CD4-positive, alpha-beta memory T cell (primary cell): ENCODE measurements at regions of chr11 and their contacts with region 1.

Region 1: DNA sequence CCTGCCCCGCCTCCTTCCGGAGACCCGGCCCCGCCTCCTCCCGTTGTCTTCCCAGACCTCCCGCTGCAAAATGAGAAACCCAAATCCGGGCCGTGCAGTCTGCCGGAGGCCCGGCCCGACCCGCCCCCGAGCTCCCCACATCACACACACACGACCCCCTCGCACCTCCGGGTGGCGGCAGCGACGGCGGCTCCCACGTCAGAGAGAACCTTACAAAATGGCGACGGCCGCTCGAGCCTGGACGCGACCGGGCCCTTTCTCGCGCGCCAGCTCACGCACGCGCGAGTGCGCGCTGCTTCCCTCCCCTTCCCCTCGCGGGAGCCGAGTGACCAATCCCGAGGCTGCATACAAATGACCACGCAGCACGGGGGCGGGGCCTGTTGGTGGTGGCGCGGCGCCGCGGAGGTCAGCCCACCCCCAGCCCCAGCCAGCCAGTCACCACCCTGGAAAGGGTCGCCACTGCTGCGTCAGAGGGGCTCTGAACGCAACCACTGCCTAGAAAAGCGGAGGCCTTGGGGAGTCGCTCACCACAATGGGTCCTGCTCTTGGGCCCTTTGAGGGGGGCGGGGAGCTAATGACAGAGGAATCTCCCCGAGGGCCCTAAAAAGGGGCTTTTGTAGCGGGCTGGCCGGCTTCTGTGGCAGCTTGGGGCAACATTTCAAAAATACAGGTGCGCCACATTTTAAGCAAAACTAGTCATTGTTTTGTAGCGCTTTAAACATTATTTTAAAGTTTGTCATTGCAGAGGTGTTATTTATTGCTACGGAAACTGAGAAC is at the start of gene RBM4B:
- DNase-seq: peak; percentile 95 to 97 (median 96)
- H3K4me3 ChIP-seq: peak within 1 kb of the TSS; percentile 80 to 87
- H3K4me3 Mint-ChIP-seq: peak within 1 kb of the TSS; percentile 91 to 99 (median 96)
- H3K27ac ChIP-seq: peak within 1 kb of the TSS; percentile 98
- H3K27ac Mint-ChIP-seq: peak within 1 kb of the TSS; percentile 98 to 100 (median 99)
- H3K4me1 ChIP-seq: peaks cover 34% of the 10 kb centered on the region
- H3K4me1 Mint-ChIP-seq: peaks cover 21 to 53% (median 34%) of the 10 kb centered on the region in 4 donors
- H3K27me3 ChIP-seq: no peaks in the 10 kb centered on the region
- H3K27me3 Mint-ChIP-seq: no peaks in the 10 kb centered on the region
- total RNA-seq, gene RBM4B: 26.6 to 26.9 TPM

Region 2: GRCh38 chr11:66311965-66312548 is 365.7 kb before region 1 on chr11:
- CTCF ChIA-PET with region 1: no interaction called
- POLR2A ChIA-PET with region 1: no interaction called
- intact Hi-C with region 1: loop called (anchors 5 kb)
- DNase-seq: peak; percentile 97 to 99 (median 98)
- H3K4me3 ChIP-seq: peak overlapping the region; percentile 43 to 88
- H3K4me3 Mint-ChIP-seq: peak overlapping the region; percentile 89 to 97 (median 94)
- H3K27ac ChIP-seq: peak overlapping the region; percentile 62
- H3K27ac Mint-ChIP-seq: peak overlapping the region; percentile 93 to 100 (median 99)
- H3K4me1 ChIP-seq: peaks cover 22% of the 10 kb centered on the region
- H3K4me1 Mint-ChIP-seq: peaks cover 4 to 20% (median 8%) of the 10 kb centered on the region in 4 donors
- H3K27me3 ChIP-seq: no peaks in the 10 kb centered on the region
- H3K27me3 Mint-ChIP-seq: peaks cover 2 to 3% of the 10 kb centered on the region in 2 donors

Region 3: DNA sequence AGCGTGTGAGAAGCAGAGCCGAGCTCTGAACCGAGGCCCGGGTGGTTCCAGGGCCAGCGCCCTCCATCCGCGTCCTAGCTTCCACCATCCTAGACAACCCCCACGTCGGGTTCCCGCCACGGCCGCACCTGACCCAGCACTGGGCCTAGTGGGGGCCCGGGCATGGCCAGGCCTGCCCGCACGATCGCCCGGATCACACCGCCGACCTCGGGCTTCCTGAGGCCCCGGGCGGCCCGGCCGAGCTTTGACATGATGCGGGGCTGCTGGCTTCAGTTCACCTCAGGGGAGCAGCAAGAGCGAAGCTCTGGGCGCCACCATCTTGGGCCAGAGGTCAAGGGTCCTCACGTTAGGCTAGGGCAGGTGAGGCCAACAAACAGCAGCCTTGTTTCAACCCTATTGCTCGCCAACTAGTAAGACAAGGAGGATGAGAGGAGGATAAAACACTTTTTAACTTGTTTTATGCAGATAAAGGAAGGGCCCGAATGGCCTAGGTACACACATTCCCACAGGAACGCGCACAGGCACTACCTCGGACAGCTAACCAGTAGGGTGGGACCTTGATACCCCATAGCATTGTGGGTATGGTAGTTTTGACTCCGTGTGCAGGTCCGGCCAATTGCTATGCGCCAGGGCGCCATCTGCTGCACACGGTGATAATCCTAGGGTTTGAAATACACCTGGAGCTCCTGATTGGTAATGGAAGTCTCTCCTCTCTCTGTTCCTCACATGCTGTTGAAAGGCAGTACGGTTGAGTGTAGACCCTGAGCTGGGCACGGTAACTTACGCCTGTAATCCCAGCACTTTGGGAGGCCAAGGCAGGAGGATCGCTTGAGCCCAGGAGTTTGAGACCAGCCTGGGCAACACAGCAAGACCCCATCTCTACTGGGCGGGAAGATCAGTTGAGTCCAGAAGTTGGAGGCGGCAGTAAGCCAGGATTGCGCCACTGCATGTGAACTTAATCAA is 239.0 kb before region 1 on chr11 and contains the start of gene MRPL11:
- CTCF ChIA-PET with region 1: interaction called, 20 read pairs
- POLR2A ChIA-PET with region 1: interaction called, 21 read pairs
- intact Hi-C with region 1: no loop called
- DNase-seq: peak; percentile 89 to 92 (median 91)
- H3K4me3 ChIP-seq: peak within 1 kb of the TSS; percentile 67 to 88
- H3K4me3 Mint-ChIP-seq: peak within 1 kb of the TSS; percentile 87 to 94 (median 91)
- H3K27ac ChIP-seq: peak within 1 kb of the TSS; percentile 69
- H3K27ac Mint-ChIP-seq: peak within 1 kb of the TSS; percentile 88 to 100 (median 98)
- H3K4me1 ChIP-seq: peaks cover 7% of the 10 kb centered on the region
- H3K4me1 Mint-ChIP-seq: peaks cover 6 to 17% (median 11%) of the 10 kb centered on the region in 4 donors
- H3K27me3 ChIP-seq: no peaks in the 10 kb centered on the region
- H3K27me3 Mint-ChIP-seq: peaks cover 2 to 3% of the 10 kb centered on the region in 2 donors
- total RNA-seq, gene MRPL11: 22.0 to 27.9 TPM

Region 4: DNA sequence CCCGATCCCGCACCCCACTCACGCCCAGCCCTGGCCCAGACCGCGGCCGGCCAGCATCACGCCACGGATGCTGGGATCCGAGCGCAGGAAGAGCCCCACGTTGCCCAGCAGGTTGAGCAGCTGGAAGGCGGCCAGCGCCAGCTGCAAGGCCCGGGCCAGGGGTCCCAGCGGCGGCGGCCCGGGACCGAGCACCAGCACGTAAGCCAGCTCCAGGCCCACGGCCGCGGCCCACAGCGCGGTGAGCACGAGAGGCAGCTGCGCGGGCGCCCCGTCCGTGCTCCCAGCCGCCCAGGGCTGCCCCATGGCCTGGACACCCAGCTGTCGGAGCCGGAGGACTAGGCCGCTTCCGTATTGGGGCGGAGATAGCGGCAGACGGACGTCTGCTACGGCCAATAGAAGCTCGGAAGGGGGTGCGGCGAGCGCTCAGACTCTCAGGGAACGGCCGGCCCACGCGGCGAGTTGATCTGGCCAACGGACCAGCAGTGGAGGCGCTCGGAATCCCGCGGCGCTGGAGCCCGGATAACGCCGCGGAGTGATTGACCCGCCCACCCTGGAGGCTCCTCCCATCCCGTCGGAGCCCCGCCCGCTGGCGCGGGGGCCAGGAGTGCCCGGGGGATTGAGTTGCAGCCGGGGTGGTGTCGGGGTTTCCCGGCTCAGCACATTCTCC is 132.0 kb before region 1 on chr11 and contains the start of gene ZDHHC24:
- CTCF ChIA-PET with region 1: interaction called, 17 read pairs
- POLR2A ChIA-PET with region 1: interaction called, 44 read pairs
- intact Hi-C with region 1: loop called (anchors 1 kb)
- DNase-seq: peak; percentile 79 to 86 (median 82)
- H3K4me3 ChIP-seq: peak within 1 kb of the TSS; percentile 82 to 84
- H3K4me3 Mint-ChIP-seq: peak within 1 kb of the TSS; percentile 85 to 96 (median 92)
- H3K27ac ChIP-seq: peak within 1 kb of the TSS; percentile 82
- H3K27ac Mint-ChIP-seq: peak within 1 kb of the TSS; percentile 67 to 98 (median 92)
- H3K4me1 ChIP-seq: peaks cover 35% of the 10 kb centered on the region
- H3K4me1 Mint-ChIP-seq: peaks cover 22 to 59% (median 34%) of the 10 kb centered on the region in 4 donors
- H3K27me3 ChIP-seq: no peaks in the 10 kb centered on the region
- H3K27me3 Mint-ChIP-seq: no peaks in the 10 kb centered on the region
- total RNA-seq, gene ZDHHC24: 24.5 to 27.2 TPM

Region 5: GRCh38 chr11:66592457-66593302 is 85.1 kb before region 1 on chr11 and contains the starts of genes CCDC87 and CCS:
- CTCF ChIA-PET with region 1: interaction called, 45 read pairs
- POLR2A ChIA-PET with region 1: interaction called, 50 read pairs
- intact Hi-C with region 1: loop called (anchors 1 kb)
- DNase-seq: peak; percentile 95 to 98 (median 97)
- H3K4me3 ChIP-seq: peak within 1 kb of the TSS; percentile 71 to 98
- H3K4me3 Mint-ChIP-seq: peak within 1 kb of the TSS; percentile 98 to 100 (median 99)
- H3K27ac ChIP-seq: peak within 1 kb of the TSS; percentile 88
- H3K27ac Mint-ChIP-seq: peak within 1 kb of the TSS; percentile 96 to 100 (median 100)
- H3K4me1 ChIP-seq: peaks cover 35% of the 10 kb centered on the region
- H3K4me1 Mint-ChIP-seq: peaks cover 16 to 42% (median 27%) of the 10 kb centered on the region in 4 donors
- H3K27me3 ChIP-seq: no peaks in the 10 kb centered on the region
- H3K27me3 Mint-ChIP-seq: no peaks in the 10 kb centered on the region
- total RNA-seq, gene CCDC87: not detected
- total RNA-seq, gene CCS: 61.0 to 61.5 TPM

Region 6: DNA sequence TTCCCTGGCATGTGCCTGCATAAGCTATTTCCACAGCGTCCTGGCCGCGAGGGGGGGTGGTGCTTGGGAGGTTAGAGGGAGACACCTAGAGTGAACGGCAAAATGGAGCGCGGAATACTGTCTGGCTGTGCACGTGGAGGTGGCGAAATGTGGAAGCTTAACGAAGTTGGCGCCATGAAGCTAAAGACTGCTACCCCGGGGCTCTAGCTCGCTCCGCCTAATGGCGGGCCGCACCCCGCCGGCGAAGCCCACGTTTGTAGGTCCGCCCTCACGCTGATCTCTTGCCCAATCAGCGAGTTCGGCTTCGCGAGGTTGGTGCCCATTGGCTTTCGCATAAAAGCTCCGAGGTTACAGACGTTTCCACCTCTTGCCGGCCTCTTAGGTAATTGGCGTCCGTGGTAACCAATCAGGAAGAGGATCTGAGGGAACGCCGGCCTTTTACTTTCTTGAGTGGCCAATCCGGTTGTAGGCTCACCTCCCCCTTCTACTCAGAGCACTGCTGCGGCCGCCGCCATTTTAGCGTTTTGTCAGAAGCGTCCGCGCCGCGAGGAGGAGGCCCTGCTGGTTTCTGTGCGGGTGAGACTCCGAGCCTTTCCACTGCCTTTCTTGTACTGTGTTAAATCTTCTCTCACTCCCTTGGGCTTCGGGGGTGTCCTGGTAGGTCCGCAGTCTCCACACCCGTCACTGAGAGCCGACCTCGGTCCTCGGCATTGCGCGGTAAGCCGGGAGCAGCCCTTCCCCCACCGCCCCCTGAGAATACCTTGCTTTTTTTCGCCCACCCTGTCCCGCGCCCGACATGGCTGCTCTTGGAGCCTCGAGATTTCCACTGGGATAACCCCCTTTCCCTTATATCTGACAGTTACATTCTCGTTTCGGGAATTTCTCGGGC is 39.4 kb before region 1 on chr11 and contains the start of gene RBM4:
- CTCF ChIA-PET with region 1: interaction called, 21 read pairs
- POLR2A ChIA-PET with region 1: interaction called, 81 read pairs
- intact Hi-C with region 1: loop called (anchors 1 kb)
- DNase-seq: peak; percentile 95 to 99 (median 98)
- H3K4me3 ChIP-seq: peak within 1 kb of the TSS; percentile 63 to 96
- H3K4me3 Mint-ChIP-seq: peak within 1 kb of the TSS; percentile 97 to 99 (median 98)
- H3K27ac ChIP-seq: peak within 1 kb of the TSS; percentile 88
- H3K27ac Mint-ChIP-seq: peak within 1 kb of the TSS; percentile 94 to 99 (median 99)
- H3K4me1 ChIP-seq: peaks cover 49% of the 10 kb centered on the region
- H3K4me1 Mint-ChIP-seq: peaks cover 48 to 81% (median 59%) of the 10 kb centered on the region in 4 donors
- H3K27me3 ChIP-seq: no peaks in the 10 kb centered on the region
- H3K27me3 Mint-ChIP-seq: no peaks in the 10 kb centered on the region
- total RNA-seq, gene RBM4: 183 to 189 TPM